AG04449 (cell line): ENCODE measurements at regions of chr3 and their contacts with region 1.

Region 1: DNA sequence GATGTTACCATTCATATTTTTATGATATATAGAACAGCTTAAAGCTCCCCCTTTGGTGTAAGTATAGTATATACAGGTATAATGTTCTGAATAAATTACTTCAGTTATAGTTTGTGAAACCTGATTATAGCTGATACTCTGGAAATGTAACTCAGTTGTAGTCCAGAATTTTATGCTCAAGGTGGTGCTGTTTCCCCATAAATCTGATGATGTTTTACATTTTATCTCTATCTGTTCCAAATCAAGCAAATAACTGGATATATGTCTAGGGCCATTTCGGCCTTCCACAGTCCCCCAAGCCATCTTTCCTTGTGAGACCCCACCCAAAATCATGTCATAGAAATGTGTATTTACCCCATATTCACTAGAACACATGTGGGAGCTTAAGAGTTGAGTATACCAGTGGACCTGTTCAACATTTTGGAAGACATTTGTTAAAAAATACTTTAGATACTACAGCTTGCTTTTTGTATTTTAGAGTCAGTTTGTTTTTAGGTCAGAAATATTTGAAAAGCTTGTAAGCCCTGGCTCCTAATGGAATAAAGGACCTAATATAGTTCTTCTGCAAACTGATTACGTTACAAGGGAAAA is 107.1 kb downstream of the ATG7 start:
- DNase-seq: no peak
- H3K4me3 ChIP-seq: no peak overlapping the region
- CTCF ChIP-seq: peak; percentile 22

Region 2: DNA sequence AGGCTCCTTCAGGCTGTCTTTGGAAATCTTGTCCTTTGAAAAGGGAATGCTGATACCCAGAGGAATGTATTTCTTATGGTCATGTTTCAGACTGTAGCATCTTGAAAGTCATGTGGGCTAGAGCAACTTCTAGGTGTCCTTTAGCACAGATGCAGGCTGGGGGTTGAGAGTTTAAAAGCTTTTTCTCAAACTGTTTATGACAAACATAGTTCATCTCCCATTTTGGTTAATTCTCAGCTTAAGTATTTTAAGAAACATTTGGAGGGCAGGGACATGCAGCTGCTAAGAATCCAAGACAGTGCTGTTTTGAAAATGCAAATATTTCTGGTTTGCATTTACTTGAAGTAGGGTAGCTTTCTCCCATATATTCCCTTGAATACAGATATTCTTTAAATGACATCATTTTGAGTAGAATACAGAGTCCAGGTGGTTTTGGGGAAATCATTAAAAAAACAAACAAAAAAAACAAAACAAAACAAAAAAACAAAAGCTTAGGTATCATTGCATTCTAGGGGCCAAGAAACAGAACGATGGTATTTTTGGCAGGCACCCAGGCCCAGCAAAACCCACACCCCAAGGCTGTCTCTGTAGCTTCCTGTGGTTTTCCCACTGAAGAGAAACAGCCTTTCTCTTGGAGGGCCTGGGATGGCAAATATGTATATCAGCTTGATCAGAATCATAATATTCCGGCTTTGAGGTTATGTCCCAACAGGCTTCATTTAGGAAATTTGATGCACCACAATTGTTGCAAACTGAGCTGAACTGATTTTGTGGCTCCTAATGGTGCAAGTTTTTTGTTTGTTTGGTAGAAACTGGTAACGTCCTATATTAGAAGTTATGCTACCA is 12.9 kb after region 1 on chr3:
- CTCF ChIA-PET with region 1: interaction called, 38 read pairs
- POLR2A ChIA-PET with region 1: no interaction called
- DNase-seq: peak; percentile 56
- H3K4me3 ChIP-seq: no peak overlapping the region
- CTCF ChIP-seq: no peak

Region 3: GRCh38 chr3:11558002-11558401 is 178.7 kb after region 1 on chr3:
- CTCF ChIA-PET with region 1: interaction called, 48 read pairs
- POLR2A ChIA-PET with region 1: no interaction called
- DNase-seq: no peak
- H3K4me3 ChIP-seq: no peak overlapping the region
- CTCF ChIP-seq: no peak

Region 4: GRCh38 chr3:11632564-11632963 is 253.2 kb after region 1 on chr3:
- CTCF ChIA-PET with region 1: interaction called, 36 read pairs
- POLR2A ChIA-PET with region 1: interaction called, 3 read pairs
- DNase-seq: no peak
- H3K4me3 ChIP-seq: no peak overlapping the region
- CTCF ChIP-seq: no peak

Region 5: DNA sequence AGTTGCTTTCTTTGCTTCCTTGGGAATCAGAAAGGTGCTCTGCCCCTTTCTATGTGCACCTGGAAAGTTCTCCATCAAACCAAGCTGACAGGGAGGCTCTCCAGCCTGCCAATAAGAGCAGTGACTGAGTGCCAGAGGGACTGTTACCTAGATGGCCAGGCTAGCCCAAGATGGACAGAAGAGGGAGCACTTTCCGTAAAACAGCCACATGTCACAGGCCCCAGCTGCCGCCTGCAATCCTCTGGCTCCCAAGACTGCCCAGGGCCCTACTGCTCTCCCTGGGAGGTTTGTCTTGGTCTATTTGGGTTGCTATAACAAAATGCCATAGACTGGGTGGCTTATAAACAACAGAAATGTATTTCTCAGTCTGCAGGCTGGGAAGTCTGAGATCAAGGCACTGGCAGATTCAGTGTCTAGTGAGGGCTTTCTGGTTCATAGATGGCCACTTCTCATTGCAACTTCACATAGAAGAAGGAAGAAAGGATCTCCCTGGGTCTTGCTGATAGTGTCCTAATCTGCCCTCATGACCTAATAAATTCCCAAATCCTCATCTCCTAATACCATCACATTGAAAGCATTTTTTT is 395.1 kb after region 1 on chr3:
- CTCF ChIA-PET with region 1: interaction called, 13 read pairs
- POLR2A ChIA-PET with region 1: no interaction called
- DNase-seq: no peak
- H3K4me3 ChIP-seq: no peak overlapping the region
- CTCF ChIP-seq: peak; percentile 61

Region 6: DNA sequence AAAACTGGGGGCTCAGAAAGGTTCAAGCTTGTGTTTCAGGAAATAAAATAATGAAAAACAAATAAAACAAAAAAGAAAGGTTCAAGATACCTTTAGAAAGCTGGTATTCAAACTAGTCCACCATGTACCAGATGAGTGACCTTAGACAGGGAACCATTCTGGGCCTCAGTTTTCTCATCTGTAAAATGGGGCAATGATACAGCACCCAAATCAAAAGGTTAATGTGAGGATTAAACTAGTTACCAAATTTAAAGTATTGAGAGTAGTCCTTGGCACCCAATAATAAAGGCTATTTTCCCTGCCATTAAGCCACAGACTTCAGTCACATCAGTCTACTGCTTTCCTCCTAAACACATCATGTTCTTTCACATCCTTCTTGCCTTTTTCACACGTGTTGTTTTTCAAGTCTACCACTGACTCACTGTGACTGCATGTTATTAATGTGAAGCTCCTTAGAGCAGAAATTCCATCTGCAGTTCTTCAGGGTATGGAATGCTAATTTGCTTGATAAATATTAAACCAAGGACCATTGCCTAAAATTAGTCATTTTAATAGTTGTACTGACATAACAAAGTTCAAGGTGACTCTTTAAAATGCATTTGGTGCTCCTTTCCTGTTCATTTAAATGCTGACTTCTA is 447.4 kb after region 1 on chr3:
- CTCF ChIA-PET with region 1: interaction called, 18 read pairs
- POLR2A ChIA-PET with region 1: no interaction called
- DNase-seq: peak; percentile 57
- H3K4me3 ChIP-seq: no peak overlapping the region
- CTCF ChIP-seq: no peak

Region 7: DNA sequence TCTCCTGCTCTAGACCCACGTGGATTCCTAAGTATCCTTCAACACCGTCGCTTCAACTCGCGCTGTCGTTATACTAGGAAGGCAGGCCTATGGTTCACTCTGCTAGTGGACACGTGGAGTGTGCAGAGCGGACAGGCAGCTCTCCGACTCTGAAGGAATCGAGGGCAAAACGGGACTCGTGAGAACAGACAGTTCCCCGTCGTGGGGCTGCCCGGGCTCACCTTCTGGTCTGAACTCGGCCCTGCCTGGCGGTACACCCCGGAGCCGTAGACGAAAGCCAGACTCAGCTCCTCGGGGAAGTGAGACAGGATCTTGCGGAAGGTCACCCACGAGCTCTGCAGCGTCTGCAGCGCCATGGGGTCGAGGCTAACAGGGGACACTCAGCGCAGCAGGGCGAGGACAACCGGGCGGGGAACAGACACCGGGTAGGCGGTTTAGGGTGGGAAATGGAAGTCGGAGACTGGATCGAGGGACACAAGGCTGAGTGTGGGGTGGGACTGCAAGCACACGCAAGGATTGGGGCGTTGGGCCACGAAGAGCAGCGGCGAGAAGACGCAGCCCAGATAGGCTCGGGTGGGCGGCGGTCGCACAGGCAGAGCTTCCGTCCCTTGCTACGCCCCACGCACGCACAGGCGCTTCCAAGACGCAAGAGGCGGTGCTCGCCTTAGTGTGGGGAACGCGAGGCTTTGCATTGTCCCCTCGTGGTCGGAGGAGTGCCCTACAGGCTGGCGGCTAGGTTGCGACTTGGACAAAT is 467.1 kb after region 1 on chr3 and contains the start of gene TAMM41:
- CTCF ChIA-PET with region 1: interaction called, 11 read pairs
- POLR2A ChIA-PET with region 1: no interaction called
- DNase-seq: peak; percentile 24
- H3K4me3 ChIP-seq: peak within 1 kb of the TSS; percentile 99
- CTCF ChIP-seq: peak; percentile 92